Activated T-helper 1 cell treated with anti-CD3 and anti-CD28 coated beads, Interleukin-12 subunit alpha, Interleukin-12 subunit beta, Interleukin-2, Interleukin-4 antibody, amounts not matched to agents 30 ng/mL and 10 ng/mL and 1 ng/mL, durations not matched to agents 14 hours and 24 hours and 36 hours (primary cell): ENCODE measurements at regions of chr5 and their contacts with region 1.

Region 1: GRCh38 chr5:902129-902916 is 9.6 kb downstream of the TRIP13 start:
- DNase-seq: no peak
- H3K4me3 Mint-ChIP-seq: no peak overlapping the region
- H3K27ac Mint-ChIP-seq: no peak overlapping the region
- H3K4me1 Mint-ChIP-seq: no peaks in the 10 kb centered on the region
- H3K27me3 Mint-ChIP-seq: no peaks in the 10 kb centered on the region

Region 2: DNA sequence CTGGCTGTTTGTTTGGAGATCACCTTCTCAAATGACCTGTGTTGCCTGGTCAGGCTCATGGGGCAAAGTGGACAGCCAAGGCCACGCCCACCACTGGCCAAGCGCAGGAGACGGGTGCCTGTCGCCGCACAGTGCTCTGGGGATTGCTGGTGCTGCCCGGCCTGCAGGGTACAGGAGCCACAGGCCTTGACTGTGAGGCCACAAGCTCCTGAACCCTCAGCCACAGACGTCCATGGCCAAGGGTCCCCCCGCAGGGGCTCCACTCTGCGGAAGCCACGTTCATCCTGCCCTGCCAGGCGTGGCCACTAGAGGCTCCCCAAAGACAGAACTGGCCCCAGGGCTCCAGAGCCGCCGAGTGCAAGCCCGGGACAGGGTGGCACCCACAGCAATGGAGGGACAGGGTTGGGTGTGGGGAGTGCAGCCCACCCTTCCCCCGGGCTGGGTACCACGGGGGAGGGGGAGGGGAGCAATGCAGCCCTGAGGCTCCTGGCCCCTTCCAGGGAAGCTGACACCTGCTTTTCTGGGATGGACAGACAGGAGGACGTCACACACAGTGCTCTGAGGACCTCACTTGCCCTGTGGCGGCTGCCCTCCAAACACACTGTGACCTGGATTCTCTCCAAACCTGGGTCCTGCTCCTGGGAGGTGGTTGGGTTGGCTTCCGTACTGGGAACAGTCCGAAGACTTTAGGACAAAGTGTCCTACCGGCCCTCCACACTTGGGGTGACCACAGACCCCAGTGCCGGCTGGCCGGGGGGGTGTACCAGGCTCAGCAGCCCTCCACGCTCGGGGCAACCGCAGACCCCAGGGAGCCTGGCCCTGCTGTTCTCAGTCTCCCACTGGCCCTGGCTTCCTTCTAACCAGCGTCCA is 230.6 kb before region 1 on chr5:
- intact Hi-C with region 1: loop called (anchors 2 kb)
- DNase-seq: peak; percentile 35
- H3K4me3 Mint-ChIP-seq: no peak overlapping the region
- H3K27ac Mint-ChIP-seq: no peak overlapping the region
- H3K4me1 Mint-ChIP-seq: no peaks in the 10 kb centered on the region
- H3K27me3 Mint-ChIP-seq: peaks cover 3% of the 10 kb centered on the region